Activated T-helper 2 cell treated with anti-CD3 and anti-CD28 coated beads, Interferon-gamma antibody, Interleukin-2, Interleukin-4, amounts not matched to agents 10 μg/mL and 5 μg/mL and 100 μg/mL, durations not matched to agents 14 hours and 24 hours and 36 hours (primary cell): ENCODE measurements at regions of chr4 and their contacts with region 1.

Region 1: GRCh38 chr4:123671633-123672404 is 275.2 kb downstream of the SPRY1 start:
- DNase-seq: no peak
- H3K4me3 Mint-ChIP-seq: no peak overlapping the region
- H3K27ac Mint-ChIP-seq: no peak overlapping the region
- H3K4me1 Mint-ChIP-seq: peaks cover 29% of the 10 kb centered on the region
- H3K27me3 Mint-ChIP-seq: peaks cover 72% of the 10 kb centered on the region

Region 2: DNA sequence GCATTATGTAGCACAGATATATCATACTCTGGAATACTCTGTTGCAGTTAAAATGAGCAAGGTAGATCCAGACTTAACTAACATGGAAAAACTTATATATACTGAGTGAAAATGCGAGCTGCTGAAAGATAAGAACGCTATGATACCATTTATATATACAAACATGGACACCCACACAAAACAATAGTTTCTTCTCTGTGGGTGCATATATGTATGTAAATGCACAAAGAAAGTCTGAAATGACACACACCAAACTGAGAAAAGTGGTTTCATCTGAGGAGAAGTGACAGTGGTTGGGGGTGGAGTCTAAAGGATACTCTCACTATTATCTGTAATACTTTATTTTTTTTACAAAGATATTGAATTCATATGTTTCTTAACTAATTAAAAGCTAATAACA is 857.4 kb before region 1 on chr4:
- intact Hi-C with region 1: loop called (anchors 1 kb)
- DNase-seq: no peak
- H3K4me3 Mint-ChIP-seq: no peak overlapping the region
- H3K27ac Mint-ChIP-seq: no peak overlapping the region
- H3K4me1 Mint-ChIP-seq: peaks cover 9% of the 10 kb centered on the region
- H3K27me3 Mint-ChIP-seq: peaks cover 23% of the 10 kb centered on the region

Region 3: GRCh38 chr4:123421227-123421936 is 250.4 kb before region 1 on chr4:
- intact Hi-C with region 1: loop called (anchors 2 kb)
- DNase-seq: no peak
- H3K4me3 Mint-ChIP-seq: peak overlapping the region; percentile 5
- H3K27ac Mint-ChIP-seq: peak overlapping the region; percentile 99
- H3K4me1 Mint-ChIP-seq: peaks cover 69% of the 10 kb centered on the region
- H3K27me3 Mint-ChIP-seq: no peaks in the 10 kb centered on the region

Region 4: DNA sequence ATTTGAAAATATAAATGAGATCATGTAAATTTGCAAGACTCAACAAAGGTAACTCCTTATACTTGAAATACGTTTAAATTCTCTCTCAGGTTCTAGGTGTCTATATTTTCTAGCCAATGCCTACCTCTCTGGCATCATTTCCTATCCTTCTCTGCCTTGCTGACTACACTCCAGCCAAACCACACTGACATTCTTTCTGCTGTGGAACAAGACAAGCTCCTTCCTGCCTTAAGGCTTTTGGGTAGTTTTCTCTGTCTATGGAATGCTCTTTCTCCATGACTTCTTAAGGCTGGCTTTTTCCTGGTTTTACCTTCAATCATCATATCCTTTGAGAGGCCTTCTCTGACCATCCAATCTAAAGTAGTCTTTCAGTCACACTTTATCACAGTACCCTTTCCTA is 74.2 kb before region 1 on chr4:
- intact Hi-C with region 1: loop called (anchors 2 kb)
- DNase-seq: no peak
- H3K4me3 Mint-ChIP-seq: no peak overlapping the region
- H3K27ac Mint-ChIP-seq: no peak overlapping the region
- H3K4me1 Mint-ChIP-seq: peaks cover 29% of the 10 kb centered on the region
- H3K27me3 Mint-ChIP-seq: peaks cover 15% of the 10 kb centered on the region

Region 5: GRCh38 chr4:124044867-124045266 is 373.0 kb after region 1 on chr4:
- intact Hi-C with region 1: no loop called
- DNase-seq: no peak
- H3K4me3 Mint-ChIP-seq: no peak overlapping the region
- H3K27ac Mint-ChIP-seq: no peak overlapping the region
- H3K4me1 Mint-ChIP-seq: no peaks in the 10 kb centered on the region
- H3K27me3 Mint-ChIP-seq: no peaks in the 10 kb centered on the region